CD14-positive monocyte (primary cell): ENCODE measurements at regions of chr10 and their contacts with region 1.

Region 1: GRCh38 chr10:119750391-119751230 is 24.8 kb downstream of the INPP5F start:
- DNase-seq: peak; percentile 44 to 70 (median 66)
- H3K4me3 ChIP-seq: no peak overlapping the region
- H3K4me3 Mint-ChIP-seq: no peak overlapping the region
- H3K27ac ChIP-seq: no peak overlapping the region
- H3K27ac Mint-ChIP-seq: peak overlapping the region in 1 of 7 donors; percentile 30
- H3K4me1 ChIP-seq: no peaks in the 10 kb centered on the region
- H3K4me1 Mint-ChIP-seq: peaks cover 3% of the 10 kb centered on the region
- H3K27me3 ChIP-seq: no peaks in the 10 kb centered on the region
- H3K27me3 Mint-ChIP-seq: peaks cover 0 to 3% (median 1%) of the 10 kb centered on the region in 3 donors
- CTCF ChIP-seq: peak; percentile 91

Region 2: GRCh38 chr10:119555178-119555784 is 195.3 kb before region 1 on chr10:
- intact Hi-C with region 1: no loop called
- DNase-seq: no peak
- H3K4me3 ChIP-seq: no peak overlapping the region
- H3K4me3 Mint-ChIP-seq: no peak overlapping the region
- H3K27ac ChIP-seq: no peak overlapping the region
- H3K27ac Mint-ChIP-seq: no peak overlapping the region
- H3K4me1 ChIP-seq: no peaks in the 10 kb centered on the region
- H3K4me1 Mint-ChIP-seq: no peaks in the 10 kb centered on the region
- H3K27me3 ChIP-seq: no peaks in the 10 kb centered on the region
- H3K27me3 Mint-ChIP-seq: peaks cover under 1 to 4% (median 4%) of the 10 kb centered on the region in 3 donors
- CTCF ChIP-seq: no peak

Region 3: GRCh38 chr10:119784340-119785070 is 33.9 kb after region 1 on chr10:
- intact Hi-C with region 1: loop called in 1 of 2 experiments (anchors 5 kb)
- DNase-seq: peak; percentile 31 to 61 (median 31)
- H3K4me3 ChIP-seq: no peak overlapping the region
- H3K4me3 Mint-ChIP-seq: peak overlapping the region in 1 of 2 donors; percentile 59
- H3K27ac ChIP-seq: no peak overlapping the region
- H3K27ac Mint-ChIP-seq: peak overlapping the region in 3 of 7 donors; percentile 1 to 50 (median 7)
- H3K4me1 ChIP-seq: peaks cover 25 to 41% of the 10 kb centered on the region in 2 donors
- H3K4me1 Mint-ChIP-seq: peaks cover 39% of the 10 kb centered on the region
- H3K27me3 ChIP-seq: no peaks in the 10 kb centered on the region
- H3K27me3 Mint-ChIP-seq: peaks cover 0 to 2% (median 0%) of the 10 kb centered on the region in 3 donors
- CTCF ChIP-seq: no peak

Region 4: GRCh38 chr10:119859420-119860258 is 109.0 kb after region 1 on chr10:
- intact Hi-C with region 1: loop called (anchors 2 to 5 kb)
- DNase-seq: peak; percentile 15 to 67 (median 43)
- H3K4me3 ChIP-seq: no peak overlapping the region
- H3K4me3 Mint-ChIP-seq: no peak overlapping the region
- H3K27ac ChIP-seq: peak overlapping the region in 1 of 2 donors; percentile 45
- H3K27ac Mint-ChIP-seq: peak overlapping the region in 5 of 7 donors; percentile 9 to 61 (median 41)
- H3K4me1 ChIP-seq: no peaks in the 10 kb centered on the region
- H3K4me1 Mint-ChIP-seq: peaks cover 23% of the 10 kb centered on the region
- H3K27me3 ChIP-seq: no peaks in the 10 kb centered on the region
- H3K27me3 Mint-ChIP-seq: no peaks in the 10 kb centered on the region
- CTCF ChIP-seq: peak; percentile 79

Region 5: DNA sequence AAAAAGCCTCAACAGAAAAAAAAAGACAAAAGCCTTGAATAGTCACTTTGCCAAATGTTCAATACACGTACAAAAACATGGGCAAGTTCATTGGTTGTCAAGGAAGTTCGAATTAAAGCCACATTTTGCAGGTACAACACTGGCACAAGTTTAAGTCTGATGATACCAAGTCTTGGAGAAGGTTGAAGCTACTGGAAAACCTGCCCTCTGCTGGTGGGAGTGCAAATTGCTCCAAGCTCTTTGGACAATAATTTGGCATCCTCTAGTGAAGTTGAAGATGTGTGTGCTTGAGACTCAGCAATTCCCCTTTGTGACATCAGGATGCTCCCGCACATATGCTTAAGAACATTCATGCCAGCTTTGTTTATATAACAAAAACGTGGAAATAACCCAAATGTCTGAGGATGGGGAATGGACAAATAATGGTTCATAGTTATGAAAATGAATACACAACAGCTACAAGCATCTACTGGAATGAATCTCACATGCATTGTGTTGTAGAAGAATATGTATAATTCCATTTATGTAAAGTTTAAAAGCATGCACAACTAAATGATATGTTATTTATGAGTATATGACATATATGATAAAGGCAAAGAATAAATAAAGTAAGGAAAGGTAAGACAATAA is 586.4 kb after region 1 on chr10:
- intact Hi-C with region 1: loop called in 1 of 2 experiments (anchors 10 kb)
- DNase-seq: peak; percentile 2 to 21 (median 12)
- H3K4me3 ChIP-seq: no peak overlapping the region
- H3K4me3 Mint-ChIP-seq: no peak overlapping the region
- H3K27ac ChIP-seq: no peak overlapping the region
- H3K27ac Mint-ChIP-seq: no peak overlapping the region
- H3K4me1 ChIP-seq: no peaks in the 10 kb centered on the region
- H3K4me1 Mint-ChIP-seq: no peaks in the 10 kb centered on the region
- H3K27me3 ChIP-seq: no peaks in the 10 kb centered on the region
- H3K27me3 Mint-ChIP-seq: peaks cover 0 to 4% (median 2%) of the 10 kb centered on the region in 3 donors
- CTCF ChIP-seq: peak; percentile 80